Activated T-helper 1 cell treated with anti-CD3 and anti-CD28 coated beads, Interleukin-12 subunit alpha, Interleukin-12 subunit beta, Interleukin-2, Interleukin-4 antibody, amounts not matched to agents 30 ng/mL and 10 ng/mL and 1 ng/mL, durations not matched to agents 14 hours and 24 hours and 36 hours (primary cell): ENCODE measurements at regions of chr5 and their contacts with region 1.

Region 1: GRCh38 chr5:110086658-110087388 is 397.1 kb downstream of the MAN2A1 start:
- DNase-seq: peak; percentile 43
- H3K4me3 Mint-ChIP-seq: peak overlapping the region; percentile 53
- H3K27ac Mint-ChIP-seq: peak overlapping the region; percentile 87
- H3K4me1 Mint-ChIP-seq: peaks cover 45% of the 10 kb centered on the region
- H3K27me3 Mint-ChIP-seq: no peaks in the 10 kb centered on the region

Region 2: DNA sequence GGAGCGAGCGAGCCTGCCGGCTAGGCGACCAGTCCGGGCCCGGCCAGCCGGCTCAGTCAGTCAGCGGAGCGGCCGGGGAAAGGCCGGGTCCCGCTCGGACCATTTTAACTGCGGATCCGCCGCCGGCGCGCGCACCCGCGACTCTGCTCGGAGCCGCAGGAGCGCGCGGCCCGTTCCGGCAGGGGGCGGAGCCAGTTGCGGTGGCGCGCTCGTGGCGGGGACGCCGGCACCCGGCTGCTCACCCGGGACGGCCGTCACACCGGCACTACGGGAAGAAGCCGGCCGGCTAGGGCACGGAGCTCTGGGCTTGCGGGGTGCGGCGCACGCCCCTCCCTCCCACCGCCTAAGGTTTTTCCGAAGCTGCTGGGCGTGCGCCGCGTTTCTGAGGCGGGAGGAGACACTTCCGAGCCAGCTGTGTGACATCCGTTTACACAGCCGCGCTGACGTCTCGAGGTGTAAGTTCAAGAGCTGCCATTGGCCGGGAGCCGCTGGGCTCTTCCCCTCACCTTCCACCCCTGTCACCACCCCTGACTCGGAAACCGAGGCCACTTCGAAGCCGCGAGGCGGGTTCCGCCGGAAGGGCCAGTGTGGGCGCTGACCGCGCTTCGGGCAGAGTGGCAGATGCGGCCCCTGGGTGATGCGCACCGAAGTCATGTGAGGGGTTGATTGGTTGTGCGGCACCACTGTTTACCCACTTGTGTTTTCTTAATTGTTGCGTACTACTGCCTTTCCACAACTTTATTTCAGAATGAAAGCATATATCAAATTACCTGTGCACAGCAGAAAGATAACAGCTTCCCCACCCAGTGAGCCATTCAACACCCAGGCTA is 1704.7 kb before region 1 on chr5 and contains the start of gene FBXL17:
- intact Hi-C with region 1: loop called (anchors 5 kb)
- DNase-seq: peak; percentile 89
- H3K4me3 Mint-ChIP-seq: peak within 1 kb of the TSS; percentile 83
- H3K27ac Mint-ChIP-seq: peak within 1 kb of the TSS; percentile 84
- H3K4me1 Mint-ChIP-seq: peaks cover 34% of the 10 kb centered on the region
- H3K27me3 Mint-ChIP-seq: peaks cover 1% of the 10 kb centered on the region
- total RNA-seq, gene FBXL17: 8.2 and 12.2 TPM in 2 replicates

Region 3: DNA sequence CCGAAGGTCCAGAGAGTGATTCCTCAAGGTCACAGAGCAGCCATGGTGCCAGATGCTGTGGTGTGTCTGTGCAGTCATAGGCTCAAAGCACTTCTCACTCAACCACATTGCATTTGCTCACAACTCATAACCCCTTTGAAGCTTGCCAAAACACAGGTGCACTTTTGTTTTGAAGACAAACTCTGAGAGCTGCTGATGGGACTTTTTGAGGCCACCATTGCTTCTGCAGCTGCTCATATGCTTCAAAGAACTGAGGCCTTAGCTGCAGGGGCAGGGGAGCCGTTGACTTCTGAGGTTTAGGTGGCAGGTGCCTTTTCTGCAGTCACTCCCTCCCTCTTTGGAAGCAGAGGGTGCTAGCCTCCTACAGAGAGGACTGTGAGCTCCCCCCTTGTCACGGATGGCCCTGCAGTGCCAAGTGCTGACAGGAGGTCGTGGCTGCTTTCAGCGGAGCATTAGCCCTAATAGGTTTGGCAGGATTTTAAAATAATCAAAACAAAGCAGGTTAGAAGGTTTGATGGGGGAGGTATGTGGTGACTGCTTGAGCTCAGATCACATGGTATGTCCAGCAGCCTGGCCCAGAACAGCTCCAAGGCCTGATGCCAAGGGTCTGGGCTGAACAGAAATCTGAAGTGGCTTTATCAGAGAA is 165.0 kb before region 1 on chr5:
- intact Hi-C with region 1: loop called (anchors 1 kb)
- DNase-seq: peak; percentile 61
- H3K4me3 Mint-ChIP-seq: peak overlapping the region; percentile 74
- H3K27ac Mint-ChIP-seq: peak overlapping the region; percentile 95
- H3K4me1 Mint-ChIP-seq: peaks cover 39% of the 10 kb centered on the region
- H3K27me3 Mint-ChIP-seq: no peaks in the 10 kb centered on the region

Region 4: DNA sequence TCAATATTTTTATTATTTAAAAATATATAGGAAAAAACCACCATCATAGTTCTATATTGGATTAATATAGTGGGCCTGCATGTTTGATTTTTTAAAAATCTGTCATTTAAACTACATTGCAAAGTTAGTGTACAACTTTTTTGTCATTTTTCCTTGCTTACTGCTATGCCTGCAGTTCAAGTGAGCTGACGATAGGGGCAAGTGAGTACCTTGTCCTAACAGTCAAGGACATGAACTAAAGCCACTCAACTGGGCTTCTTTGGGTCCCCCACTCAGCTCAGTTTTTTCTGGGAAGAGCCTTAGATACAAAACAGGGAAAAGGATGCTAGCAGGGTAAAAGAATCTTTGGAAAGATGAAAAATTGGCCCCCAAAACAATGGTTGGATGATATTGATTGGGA is 127.2 kb before region 1 on chr5:
- intact Hi-C with region 1: loop called (anchors 1 kb)
- DNase-seq: no peak
- H3K4me3 Mint-ChIP-seq: no peak overlapping the region
- H3K27ac Mint-ChIP-seq: no peak overlapping the region
- H3K4me1 Mint-ChIP-seq: peaks cover 11% of the 10 kb centered on the region
- H3K27me3 Mint-ChIP-seq: no peaks in the 10 kb centered on the region

Region 5: GRCh38 chr5:110738812-110739651 is 652.2 kb after region 1 on chr5 and contains the start of gene SLC25A46:
- intact Hi-C with region 1: loop called (anchors 2 kb)
- DNase-seq: peak; percentile 85
- H3K4me3 Mint-ChIP-seq: peak within 1 kb of the TSS; percentile 97
- H3K27ac Mint-ChIP-seq: peak within 1 kb of the TSS; percentile 96
- H3K4me1 Mint-ChIP-seq: peaks cover 39% of the 10 kb centered on the region
- H3K27me3 Mint-ChIP-seq: peaks cover 11% of the 10 kb centered on the region
- total RNA-seq, gene SLC25A46: 54.6 and 55.4 TPM in 2 replicates

Region 6: DNA sequence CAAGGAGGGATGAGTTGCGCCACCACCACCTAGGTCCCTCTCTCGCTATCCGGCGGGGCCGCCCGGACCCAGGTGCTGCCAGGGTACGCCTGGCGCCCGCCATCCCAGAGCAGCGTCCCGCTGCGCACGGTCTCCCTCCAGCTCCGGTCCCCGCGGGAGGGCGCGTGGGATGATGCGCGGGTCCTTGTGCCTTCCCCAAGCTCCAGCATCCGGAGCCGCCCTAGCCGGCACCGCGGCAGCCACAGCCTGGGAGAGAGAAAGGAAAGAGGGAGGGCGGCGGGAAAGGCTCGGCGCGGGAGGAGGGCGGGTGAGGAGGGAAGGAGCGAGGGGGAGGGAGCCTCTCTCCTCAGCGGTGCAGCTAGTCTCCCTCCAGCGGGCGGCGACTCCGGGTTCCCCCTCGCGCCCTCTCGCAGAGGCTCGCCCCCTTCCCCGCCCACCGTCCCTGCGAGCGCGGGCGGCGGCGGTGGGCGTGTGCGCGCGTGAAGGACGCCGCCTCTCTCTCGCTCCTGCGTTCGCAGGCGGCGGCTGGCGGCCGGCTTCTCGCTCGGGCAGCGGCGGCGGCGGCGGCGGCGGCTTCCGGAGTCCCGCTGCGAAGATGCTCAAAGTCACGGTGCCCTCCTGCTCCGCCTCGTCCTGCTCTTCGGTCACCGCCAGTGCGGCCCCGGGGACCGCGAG is 1137.2 kb after region 1 on chr5 and contains the start of gene CAMK4:
- intact Hi-C with region 1: loop called (anchors 10 kb)
- DNase-seq: peak; percentile 70
- H3K4me3 Mint-ChIP-seq: peak within 1 kb of the TSS; percentile 98
- H3K27ac Mint-ChIP-seq: peak within 1 kb of the TSS; percentile 95
- H3K4me1 Mint-ChIP-seq: peaks cover 54% of the 10 kb centered on the region
- H3K27me3 Mint-ChIP-seq: peaks cover 2% of the 10 kb centered on the region
- total RNA-seq, gene CAMK4: 51.8 and 56.9 TPM in 2 replicates